Head of caudate nucleus (tissue), 42 donors: ENCODE measurements at regions of chr2 and their contacts with region 1.

Region 1: GRCh38 chr2:1546023-1546591 is 132.8 kb downstream of the TPO start:
- DNase-seq: peak in 40 of 42 donors; percentile 24 to 78 (median 58)

Region 2: DNA sequence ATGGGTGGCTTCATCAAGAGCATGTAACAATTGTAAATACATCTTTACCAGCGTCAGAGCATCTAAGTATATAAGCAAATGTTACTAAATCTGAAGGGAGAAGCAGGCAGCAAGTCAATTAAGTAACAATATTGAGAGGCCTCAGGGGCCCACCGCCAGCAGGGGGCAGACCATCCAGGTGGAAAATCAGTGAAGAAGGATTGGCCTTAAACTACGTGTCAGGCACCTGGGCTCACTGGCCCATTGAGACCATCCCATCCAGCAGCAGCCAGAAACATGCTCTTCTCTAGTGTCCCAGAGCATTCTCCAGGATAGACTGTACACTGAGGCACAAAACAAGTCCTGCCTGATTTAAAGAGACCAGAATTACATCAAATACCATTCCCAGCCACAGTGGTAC is 691.6 kb before region 1 on chr2:
- intact Hi-C with region 1: loop called (anchors 10 kb)
- DNase-seq: peak in 38 of 42 donors; percentile 16 to 78 (median 59)

Region 3: DNA sequence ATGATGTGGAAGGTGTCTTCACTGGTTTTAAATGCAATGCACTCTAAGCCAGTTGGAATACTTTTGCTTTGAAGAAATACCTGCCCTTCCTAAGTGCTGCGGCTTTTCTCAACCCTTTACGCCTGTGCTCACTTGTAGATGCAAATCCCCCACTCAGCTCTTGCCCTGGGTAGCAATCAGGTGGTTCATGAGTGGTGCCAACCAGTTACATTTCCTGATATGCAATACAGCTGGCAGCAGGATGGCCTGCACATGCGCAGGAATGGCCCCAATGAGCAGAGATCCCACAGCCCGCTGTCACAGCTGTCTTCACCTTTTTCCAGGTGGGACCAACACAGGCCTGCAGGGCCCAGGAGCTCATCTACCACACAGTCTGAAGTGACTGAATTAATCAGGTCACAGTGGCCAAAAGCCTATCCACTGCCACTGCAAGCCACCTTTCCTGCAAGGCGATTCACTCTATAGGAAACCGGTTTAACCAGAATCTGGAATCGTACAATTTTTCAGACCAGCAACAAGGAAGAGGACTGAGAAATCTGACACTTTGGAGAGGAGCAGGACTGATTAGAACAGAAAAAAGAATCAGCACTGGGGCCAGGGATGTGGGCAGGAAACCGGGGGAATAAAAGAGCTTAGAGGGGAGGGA is 537.1 kb after region 1 on chr2:
- intact Hi-C with region 1: no loop called
- DNase-seq: no peak